ENCODE measurements at regions of chr17 and their contacts with region 1.

Region 1: GRCh38 chr17:7336240-7337175 is at the start of gene ACAP1:
- DNase-seq: peak; percentile 72 to 93 (median 89)
- ATAC-seq: peak; percentile 98
- H3K4me3 ChIP-seq: peak within 1 kb of the TSS; percentile 74 to 76
- H3K4me3 Mint-ChIP-seq: peak within 1 kb of the TSS; percentile 94
- H3K27ac ChIP-seq: peak within 1 kb of the TSS; percentile 60 to 65
- H3K27ac Mint-ChIP-seq: peak within 1 kb of the TSS; percentile 97
- H3K4me1 ChIP-seq: peaks cover 55% of the 10 kb centered on the region
- H3K4me1 Mint-ChIP-seq: peaks cover 61% of the 10 kb centered on the region
- H3K27me3 ChIP-seq: no peaks in the 10 kb centered on the region
- H3K27me3 Mint-ChIP-seq: no peaks in the 10 kb centered on the region
- CTCF ChIP-seq: no peak
- total RNA-seq, gene ACAP1: 432 to 451 TPM

Region 2: DNA sequence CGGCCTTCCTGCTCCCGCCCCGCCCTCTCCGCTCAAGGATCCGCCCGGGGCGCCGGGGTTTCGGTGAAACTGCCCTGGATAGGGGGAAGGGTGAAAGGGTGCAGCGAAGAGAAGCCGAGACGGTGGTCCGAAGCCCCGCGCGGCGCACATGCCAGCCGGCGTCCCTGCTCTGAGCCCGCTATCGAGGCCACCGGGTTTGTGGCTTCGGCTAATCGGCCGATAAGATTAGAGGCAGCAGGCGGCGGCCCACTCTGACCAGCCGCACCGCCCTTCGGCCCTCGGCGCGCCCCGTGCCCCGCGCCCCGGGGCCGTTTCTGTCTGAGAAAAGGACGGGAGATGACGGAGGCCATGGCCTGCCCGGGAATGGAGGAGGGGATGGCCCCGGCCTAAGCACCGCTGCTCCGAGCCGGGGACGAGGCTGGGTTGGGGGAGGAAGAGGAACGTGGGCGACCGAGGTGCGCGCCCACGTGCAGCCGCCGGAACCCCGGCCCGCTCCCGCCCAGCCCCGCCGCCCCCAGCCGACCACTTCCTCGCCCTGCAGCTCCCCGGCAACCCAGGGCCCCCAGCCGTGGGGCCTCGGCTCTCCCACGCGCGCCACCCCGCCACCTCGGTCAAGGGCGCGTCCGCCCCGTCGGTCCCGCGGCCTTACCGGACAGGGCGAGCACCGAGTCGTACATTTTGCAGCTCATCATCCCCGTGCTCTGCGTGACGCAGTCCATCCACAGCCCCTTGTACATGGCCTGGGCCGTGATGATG is 75.2 kb before region 1 on chr17:
- CTCF ChIA-PET with region 1: no interaction called
- POLR2A ChIA-PET with region 1: no interaction called
- intact Hi-C with region 1: no loop called
- DNase-seq: peak in 6 of 9 experiments; percentile 40 to 71 (median 52)
- ATAC-seq: peak; percentile 57
- H3K4me3 ChIP-seq: peak overlapping the region; percentile 45 to 61
- H3K4me3 Mint-ChIP-seq: peak overlapping the region; percentile 80
- H3K27ac ChIP-seq: peak overlapping the region; percentile 31 to 59
- H3K27ac Mint-ChIP-seq: peak overlapping the region; percentile 90
- H3K4me1 ChIP-seq: peaks cover 34% of the 10 kb centered on the region
- H3K4me1 Mint-ChIP-seq: peaks cover 28% of the 10 kb centered on the region
- H3K27me3 ChIP-seq: peaks cover 0 to 11% of the 10 kb centered on the region in 2 experiments
- H3K27me3 Mint-ChIP-seq: no peaks in the 10 kb centered on the region
- CTCF ChIP-seq: no peak

Region 3: DNA sequence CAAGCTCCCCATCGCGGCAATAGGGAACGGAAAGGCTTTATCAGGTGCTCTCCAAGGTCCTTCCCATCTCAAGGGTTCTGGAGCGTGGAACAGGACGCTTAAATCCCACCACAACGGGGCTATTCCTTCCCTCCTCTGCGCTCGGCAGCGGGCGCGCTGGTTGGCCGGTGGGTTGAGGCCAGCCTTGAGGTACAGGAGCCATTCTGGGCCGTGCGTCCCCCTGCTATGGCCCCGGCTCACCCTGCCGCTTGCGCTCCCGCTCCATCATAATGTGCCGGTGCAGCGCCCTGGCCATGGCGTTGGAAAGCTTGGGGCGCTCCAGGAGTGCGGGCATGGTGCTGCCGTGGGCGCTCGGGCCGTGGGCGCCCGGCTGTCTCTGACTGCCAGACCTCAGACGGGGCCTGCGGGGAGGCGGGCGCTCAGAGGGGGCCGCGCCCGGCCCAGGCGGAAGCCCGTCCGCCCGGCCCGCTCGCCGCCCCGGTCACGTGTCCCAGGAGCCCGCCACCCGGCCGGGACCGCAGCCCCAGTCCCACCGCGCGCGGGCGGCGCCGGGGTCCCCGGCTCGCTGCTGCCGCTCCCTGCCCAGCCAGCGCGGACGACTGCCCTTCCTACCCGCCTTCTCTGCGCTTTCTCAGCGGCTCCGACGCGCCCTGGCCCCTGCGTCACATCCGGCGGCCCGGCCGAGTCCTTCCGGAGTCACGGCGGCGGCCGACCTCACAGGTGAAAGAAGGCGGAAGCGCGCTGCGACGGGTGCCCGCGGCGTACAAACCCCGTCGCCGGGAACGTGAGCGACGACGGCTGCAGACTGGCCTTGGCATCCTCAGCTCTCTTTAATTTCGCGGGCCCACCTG is 21.6 kb before region 1 on chr17 and contains the start of gene GPS2:
- CTCF ChIA-PET with region 1: interaction called, 95 read pairs
- POLR2A ChIA-PET with region 1: interaction called, 22 read pairs
- intact Hi-C with region 1: no loop called
- DNase-seq: peak; percentile 87 to 97 (median 94)
- ATAC-seq: peak; percentile 78
- H3K4me3 ChIP-seq: peak within 1 kb of the TSS; percentile 77 to 82
- H3K4me3 Mint-ChIP-seq: peak within 1 kb of the TSS; percentile 92
- H3K27ac ChIP-seq: peak within 1 kb of the TSS; percentile 81 to 97
- H3K27ac Mint-ChIP-seq: peak within 1 kb of the TSS; percentile 96
- H3K4me1 ChIP-seq: peaks cover 50% of the 10 kb centered on the region
- H3K4me1 Mint-ChIP-seq: peaks cover 51% of the 10 kb centered on the region
- H3K27me3 ChIP-seq: no peaks in the 10 kb centered on the region
- H3K27me3 Mint-ChIP-seq: no peaks in the 10 kb centered on the region
- CTCF ChIP-seq: no peak
- total RNA-seq, gene GPS2: 128 to 132 TPM

Region 4: DNA sequence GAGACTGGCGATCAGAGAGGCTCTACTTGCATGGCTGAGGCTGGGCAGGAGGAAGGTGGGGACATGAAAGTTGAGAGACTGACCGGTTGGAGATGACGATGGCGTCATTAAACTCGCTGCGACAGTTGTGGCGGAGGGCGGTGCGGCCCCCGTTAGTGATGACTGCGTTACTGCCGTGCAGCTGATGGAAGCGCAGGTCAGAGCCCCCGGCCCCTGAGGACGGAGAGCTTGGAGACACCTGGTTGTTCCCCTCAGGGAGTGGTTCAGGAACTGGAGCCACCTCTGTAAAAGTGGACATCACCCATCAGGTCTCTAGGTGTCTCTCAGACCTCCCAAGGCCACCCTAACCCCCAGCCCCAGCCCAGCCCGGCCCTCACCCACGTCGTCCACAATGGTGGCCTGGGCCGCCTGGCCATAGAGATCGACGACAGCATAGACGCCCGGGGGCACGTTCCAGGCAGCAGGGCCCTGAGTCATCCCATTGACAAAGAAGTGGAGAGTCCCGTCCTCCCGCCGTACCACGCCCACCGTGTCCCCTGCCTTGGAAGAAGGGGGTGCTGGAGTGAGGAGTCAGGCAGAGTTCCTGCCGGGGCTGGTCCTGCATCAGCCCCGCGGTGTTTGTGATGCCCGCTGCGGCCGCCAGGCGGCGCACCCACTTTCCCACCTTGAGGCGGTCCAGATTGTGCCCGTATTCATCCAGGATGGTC is 12.6 kb before region 1 on chr17:
- CTCF ChIA-PET with region 1: interaction called, 95 read pairs
- POLR2A ChIA-PET with region 1: interaction called, 7 read pairs
- intact Hi-C with region 1: loop called in 1 of 2 experiments (anchors 1 kb)
- DNase-seq: peak; percentile 38 to 83 (median 71)
- ATAC-seq: peak; percentile 56
- H3K4me3 ChIP-seq: no peak overlapping the region
- H3K4me3 Mint-ChIP-seq: no peak overlapping the region
- H3K27ac ChIP-seq: no peak overlapping the region
- H3K27ac Mint-ChIP-seq: no peak overlapping the region
- H3K4me1 ChIP-seq: peaks cover 14% of the 10 kb centered on the region
- H3K4me1 Mint-ChIP-seq: peaks cover 14% of the 10 kb centered on the region
- H3K27me3 ChIP-seq: no peaks in the 10 kb centered on the region
- H3K27me3 Mint-ChIP-seq: no peaks in the 10 kb centered on the region
- CTCF ChIP-seq: peak; percentile 86

Region 5: DNA sequence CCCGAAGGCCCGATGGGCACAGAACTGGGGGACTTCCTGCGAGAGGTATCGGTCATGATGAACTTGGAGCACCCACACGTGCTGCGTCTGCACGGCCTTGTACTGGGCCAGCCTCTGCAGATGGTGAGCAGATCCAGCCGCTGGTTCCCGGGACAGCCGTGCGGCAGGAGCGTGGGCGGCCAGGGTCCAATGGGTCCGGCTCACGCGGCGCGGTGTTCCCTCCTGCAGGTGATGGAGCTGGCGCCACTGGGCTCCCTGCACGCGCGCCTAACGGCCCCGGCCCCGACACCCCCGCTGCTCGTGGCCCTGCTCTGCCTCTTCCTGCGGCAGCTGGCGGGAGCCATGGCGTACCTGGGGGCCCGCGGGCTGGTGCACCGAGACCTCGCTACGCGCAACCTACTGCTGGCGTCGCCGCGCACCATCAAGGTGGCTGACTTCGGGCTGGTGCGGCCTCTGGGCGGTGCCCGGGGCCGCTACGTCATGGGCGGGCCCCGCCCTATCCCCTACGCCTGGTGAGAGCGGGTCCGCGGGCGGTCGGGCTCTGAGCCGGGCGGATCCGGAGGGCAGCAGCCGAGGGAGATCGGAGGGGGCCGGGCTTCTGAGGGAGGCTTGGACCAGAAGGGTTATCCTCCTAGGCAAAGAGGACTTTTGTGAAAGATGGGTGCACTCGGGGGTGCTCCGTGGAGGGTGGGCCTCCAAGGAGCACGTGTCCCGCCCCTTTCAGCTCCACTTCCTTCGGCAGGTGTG is 47.4 kb after region 1 on chr17:
- CTCF ChIA-PET with region 1: no interaction called
- POLR2A ChIA-PET with region 1: interaction called, 11 read pairs
- intact Hi-C with region 1: no loop called
- DNase-seq: peak; percentile 60 to 91 (median 80)
- ATAC-seq: peak; percentile 94
- H3K4me3 ChIP-seq: peak overlapping the region; percentile 66 to 75
- H3K4me3 Mint-ChIP-seq: peak overlapping the region; percentile 88
- H3K27ac ChIP-seq: peak overlapping the region; percentile 80 to 92
- H3K27ac Mint-ChIP-seq: peak overlapping the region; percentile 96
- H3K4me1 ChIP-seq: peaks cover 21% of the 10 kb centered on the region
- H3K4me1 Mint-ChIP-seq: peaks cover 8% of the 10 kb centered on the region
- H3K27me3 ChIP-seq: peaks cover 12 to 14% of the 10 kb centered on the region in 2 experiments
- H3K27me3 Mint-ChIP-seq: peaks cover 29% of the 10 kb centered on the region
- CTCF ChIP-seq: no peak